Activated CD4-positive, alpha-beta T cell treated with anti-CD3 and anti-CD28 coated beads, Interleukin-2, amount 10 ng/mL, durations not matched to agents 24 days and 14 days (primary cell): ENCODE measurements at regions of chr5 and their contacts with region 1.

Region 1: DNA sequence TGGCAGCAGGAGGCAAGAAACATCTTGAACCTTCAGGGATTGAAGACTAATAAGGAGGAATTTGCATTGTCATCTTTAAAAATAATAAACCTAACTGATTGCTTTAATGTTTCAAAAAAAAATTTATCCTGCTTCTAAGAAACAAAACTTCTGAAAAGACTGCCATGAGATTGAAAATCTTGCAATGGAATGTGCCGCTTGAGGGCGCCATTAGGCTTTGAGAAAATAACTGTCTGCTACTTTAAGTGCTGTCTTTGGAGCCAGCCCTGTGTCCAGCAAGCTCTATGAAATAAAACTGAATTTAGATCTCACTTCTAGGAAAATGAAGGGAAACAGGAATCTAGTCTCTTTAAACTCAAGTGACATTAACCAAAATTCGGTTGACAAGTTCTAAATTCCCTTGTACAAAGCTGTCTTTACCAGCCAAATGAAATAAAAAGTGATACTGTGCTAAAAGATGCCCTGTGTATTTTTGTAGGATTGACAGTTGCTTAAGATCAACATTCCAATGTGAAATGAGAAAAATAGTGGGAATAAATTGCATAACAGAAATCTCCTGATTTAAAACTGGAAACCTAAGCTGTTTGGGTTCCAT is 79.4 kb downstream of the ESM1 start:
- DNase-seq: peak; percentile 92
- H3K4me3 Mint-ChIP-seq: no peak overlapping the region
- H3K27ac Mint-ChIP-seq: no peak overlapping the region
- H3K4me1 Mint-ChIP-seq: peaks cover 50% of the 10 kb centered on the region
- H3K27me3 Mint-ChIP-seq: peaks cover 40% of the 10 kb centered on the region

Region 2: DNA sequence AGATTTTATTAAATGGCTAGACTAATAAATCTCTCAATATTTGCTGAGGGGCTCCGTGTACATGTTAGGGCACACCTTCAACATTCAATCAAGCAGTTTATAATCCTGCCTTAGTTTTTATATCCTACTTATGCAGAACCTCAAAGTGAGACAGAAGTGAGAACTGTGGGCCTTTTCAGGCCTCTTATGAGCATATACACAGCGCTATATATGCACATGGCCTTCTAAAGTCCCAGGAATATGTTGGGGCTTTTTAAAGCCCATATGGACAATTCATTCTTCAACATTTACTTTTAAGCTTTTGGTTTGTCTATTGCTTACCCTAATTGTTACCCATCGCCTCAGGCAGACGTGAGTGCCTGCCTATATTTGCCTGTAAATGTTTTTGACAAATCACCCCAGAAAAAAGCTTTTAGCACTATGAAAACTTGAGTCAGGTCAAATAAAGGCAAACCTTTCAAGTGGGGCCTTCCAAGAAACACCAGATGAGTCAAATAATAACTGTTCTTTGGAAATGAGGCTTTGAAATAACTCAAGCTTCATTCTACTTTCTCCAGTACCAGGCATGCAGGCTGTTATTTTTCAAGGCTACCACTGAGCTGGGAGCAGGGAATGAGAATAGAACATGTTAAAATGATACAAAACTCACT is 21.2 kb after region 1 on chr5:
- intact Hi-C with region 1: loop called (anchors 1 kb)
- DNase-seq: no peak
- H3K4me3 Mint-ChIP-seq: peak overlapping the region; percentile 16
- H3K27ac Mint-ChIP-seq: peak overlapping the region; percentile 64
- H3K4me1 Mint-ChIP-seq: peaks cover 8% of the 10 kb centered on the region
- H3K27me3 Mint-ChIP-seq: peaks cover 8% of the 10 kb centered on the region

Region 3: GRCh38 chr5:54985301-54986268 is 79.5 kb after region 1 on chr5 and contains the start of gene ESM1:
- intact Hi-C with region 1: no loop called
- DNase-seq: no peak
- H3K4me3 Mint-ChIP-seq: peak within 1 kb of the TSS; percentile 31
- H3K27ac Mint-ChIP-seq: no peak within 1 kb of the TSS
- H3K4me1 Mint-ChIP-seq: peaks cover 56% of the 10 kb centered on the region
- H3K27me3 Mint-ChIP-seq: peaks cover 30% of the 10 kb centered on the region
- total RNA-seq, gene ESM1: not detected in 2 replicates

Region 4: DNA sequence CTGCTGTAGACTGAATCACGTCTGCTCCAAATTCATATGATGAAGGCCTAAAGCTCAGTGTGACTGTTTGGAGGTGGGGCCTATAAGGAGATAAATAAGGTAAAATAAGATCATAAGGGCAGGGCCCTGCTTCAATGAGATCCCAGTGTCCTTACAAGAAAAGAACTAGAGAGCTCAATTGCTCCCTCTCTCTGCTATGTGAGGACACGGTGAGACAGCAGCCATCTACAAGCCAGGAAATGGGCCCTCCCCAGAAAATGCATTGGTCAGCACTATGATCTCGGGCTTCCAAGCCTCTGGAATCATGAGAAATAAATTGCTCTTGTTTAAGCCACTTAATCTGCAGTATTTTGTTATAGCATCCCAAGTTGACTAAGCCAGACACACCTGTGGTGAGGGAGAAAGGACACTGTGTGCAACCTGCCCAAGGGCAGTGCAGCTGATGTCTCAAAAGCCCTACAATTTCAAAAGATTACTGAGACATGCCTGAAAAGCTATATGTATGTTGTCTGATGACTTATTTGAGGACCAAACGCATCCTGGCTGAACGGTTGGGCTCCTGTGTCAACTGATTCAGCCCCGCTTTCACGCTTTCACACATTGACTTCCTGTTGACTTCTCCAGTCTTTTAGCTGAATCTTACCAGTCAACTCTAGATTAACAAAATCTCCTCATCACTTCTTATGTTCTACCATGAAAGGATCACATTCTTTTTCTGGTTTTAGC is 131.2 kb after region 1 on chr5:
- intact Hi-C with region 1: loop called (anchors 2 kb)
- DNase-seq: peak; percentile 90
- H3K4me3 Mint-ChIP-seq: peak overlapping the region; percentile 35
- H3K27ac Mint-ChIP-seq: peak overlapping the region; percentile 85
- H3K4me1 Mint-ChIP-seq: peaks cover 47% of the 10 kb centered on the region
- H3K27me3 Mint-ChIP-seq: no peaks in the 10 kb centered on the region

Region 5: DNA sequence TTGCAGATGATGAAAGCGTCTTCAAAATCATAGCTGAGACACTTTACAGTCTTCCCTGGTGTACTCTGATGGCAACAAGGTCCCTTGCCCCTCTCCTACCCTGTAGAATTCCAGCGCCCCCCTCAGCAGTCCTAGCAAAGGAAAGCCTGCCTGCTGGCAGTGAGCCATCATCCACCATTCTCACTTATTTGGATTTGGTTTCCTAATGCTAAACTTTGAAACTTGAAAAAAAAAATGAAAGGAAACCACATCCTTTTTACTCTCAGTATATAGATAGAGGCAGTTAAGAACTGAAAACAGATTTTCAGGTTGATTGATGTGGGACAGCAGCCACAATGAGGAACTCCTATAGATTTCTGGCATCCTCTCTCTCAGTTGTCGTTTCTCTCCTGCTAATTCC is 196.3 kb after region 1 on chr5 and contains the start of gene GZMA:
- intact Hi-C with region 1: loop called (anchors 1 kb)
- DNase-seq: peak; percentile 86
- H3K4me3 Mint-ChIP-seq: peak within 1 kb of the TSS; percentile 80
- H3K27ac Mint-ChIP-seq: peak within 1 kb of the TSS; percentile 89
- H3K4me1 Mint-ChIP-seq: peaks cover 79% of the 10 kb centered on the region
- H3K27me3 Mint-ChIP-seq: peaks cover 1% of the 10 kb centered on the region
- total RNA-seq, gene GZMA: 87.6 and 91.2 TPM in 2 replicates

Region 6: DNA sequence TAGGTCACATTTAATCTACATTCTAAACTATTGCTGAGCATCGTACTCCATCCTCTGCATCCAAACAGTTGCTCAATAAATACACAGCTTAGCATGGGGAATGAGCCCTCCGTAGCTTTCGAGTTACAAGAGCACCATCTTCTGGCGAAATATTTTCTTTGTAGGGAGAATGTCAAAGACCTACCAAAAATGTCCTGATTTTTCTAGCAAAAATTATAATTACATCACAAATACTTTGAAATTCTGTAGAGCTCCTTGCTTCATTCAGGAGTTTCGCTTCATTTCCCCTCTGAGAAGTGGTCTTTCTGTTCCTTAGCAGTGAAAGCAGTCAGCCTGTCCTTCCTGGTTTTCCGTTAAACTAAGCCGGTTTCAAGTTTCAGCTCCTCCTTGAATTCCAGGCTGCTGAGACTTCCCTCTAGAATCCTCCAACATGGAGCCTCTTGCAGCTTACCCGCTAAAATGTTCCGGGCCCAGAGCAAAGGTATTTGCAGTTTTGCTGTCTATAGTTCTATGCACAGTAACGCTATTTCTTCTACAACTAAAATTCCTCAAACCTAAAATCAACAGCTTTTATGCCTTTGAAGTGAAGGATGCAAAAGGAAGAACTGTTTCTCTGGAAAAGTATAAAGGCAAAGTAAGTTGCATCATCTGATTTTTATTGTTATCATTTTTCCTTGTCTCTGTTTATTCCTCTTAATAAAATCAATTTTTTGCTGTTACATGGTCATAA is 253.9 kb after region 1 on chr5 and contains the start of gene GPX8:
- intact Hi-C with region 1: loop called (anchors 1 kb)
- DNase-seq: peak; percentile 83
- H3K4me3 Mint-ChIP-seq: no peak within 1 kb of the TSS
- H3K27ac Mint-ChIP-seq: no peak within 1 kb of the TSS
- H3K4me1 Mint-ChIP-seq: no peaks in the 10 kb centered on the region
- H3K27me3 Mint-ChIP-seq: peaks cover 60% of the 10 kb centered on the region
- total RNA-seq, gene GPX8: not detected in 2 replicates